Dorsolateral prefrontal cortex (tissue), 120 donors: ENCODE measurements at regions of chr1 and their contacts with region 1.

Region 1: DNA sequence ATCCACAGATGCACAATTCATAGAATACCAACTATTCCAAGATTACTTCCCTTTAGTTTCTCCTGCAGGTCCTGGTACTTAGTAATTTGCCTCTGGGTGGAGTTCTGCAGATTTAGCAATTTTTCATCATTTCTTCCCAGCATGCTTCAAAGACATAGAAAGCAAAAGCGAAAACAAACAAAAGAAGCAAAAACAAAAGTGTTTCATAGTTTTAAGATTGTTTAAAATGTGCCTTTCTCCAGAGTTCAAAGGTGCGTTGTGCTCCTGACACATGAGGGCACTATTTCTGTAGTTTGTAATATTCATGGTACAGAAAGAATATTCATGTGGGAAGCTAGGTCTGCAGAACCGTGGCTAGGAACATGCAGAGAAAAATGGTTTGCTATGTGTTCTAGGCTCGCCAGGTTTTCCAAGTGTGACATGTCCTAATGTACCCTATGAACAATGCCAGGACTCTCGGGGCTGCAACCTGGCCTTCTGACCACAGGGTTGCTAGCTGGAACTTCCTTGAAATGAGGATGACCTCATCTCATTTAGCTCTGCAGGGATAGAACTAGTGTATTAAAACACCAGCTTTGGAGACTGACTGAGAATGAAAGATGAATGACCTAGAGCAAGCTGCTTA is 30.0 kb upstream of the RCSD1 start:
- DNase-seq: peak in 1 of 10 donors; percentile 39
- H3K4me3 ChIP-seq: no peak overlapping the region
- H3K27ac ChIP-seq: peak overlapping the region in 4 of 59 donors; percentile 46 to 71 (median 62)
- H3K27me3 ChIP-seq: no peaks in the 10 kb centered on the region
- CTCF ChIP-seq: peak in 52 of 56 donors; percentile 18 to 71 (median 47)

Region 2: DNA sequence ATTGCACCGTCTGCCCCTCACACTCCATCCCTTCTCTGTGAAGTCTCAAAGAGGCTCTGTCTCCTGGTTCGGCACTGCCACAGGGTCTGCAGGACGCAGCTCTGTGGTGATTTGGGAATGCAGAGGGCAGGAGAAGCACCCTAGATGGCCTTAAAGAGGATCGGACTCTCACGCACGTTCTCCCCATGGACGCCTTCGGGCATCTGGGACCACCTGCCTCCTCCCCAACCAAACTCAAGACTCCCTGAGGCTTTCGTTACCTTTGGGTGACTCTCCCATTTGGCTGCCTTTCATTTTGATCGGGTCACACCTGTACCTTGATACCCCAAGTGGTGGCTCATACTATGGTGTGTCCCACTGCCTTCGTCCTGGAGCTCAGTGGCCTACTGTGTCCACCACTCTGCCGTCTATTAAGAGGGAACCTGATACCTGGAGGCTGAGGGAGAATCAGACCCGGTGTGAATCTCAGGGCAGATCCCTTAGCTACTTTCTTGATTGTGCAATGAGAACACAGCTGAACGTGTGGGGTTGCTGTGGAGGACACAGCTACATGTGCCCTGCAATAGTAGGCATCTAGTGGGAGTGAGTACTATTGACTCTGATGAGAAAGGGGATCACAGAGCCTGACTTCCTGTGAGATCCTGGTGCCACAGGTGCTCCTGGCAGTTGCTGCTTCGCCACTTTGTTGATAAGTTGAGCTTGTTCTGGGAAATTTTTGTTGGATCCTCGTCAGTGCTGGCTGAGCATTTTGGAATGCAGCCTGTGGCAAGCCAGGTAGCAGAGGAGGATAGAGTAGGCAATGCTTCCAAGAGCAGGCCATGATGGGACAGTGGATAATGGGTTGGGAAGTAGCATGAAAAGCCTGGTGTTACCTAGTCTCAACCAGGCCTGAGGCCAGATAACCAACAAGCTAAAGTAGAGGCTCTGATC is 93.3 kb after region 1 on chr1:
- intact Hi-C with region 1: loop called (anchors 5 kb)
- DNase-seq: no peak
- H3K4me3 ChIP-seq: no peak overlapping the region
- H3K27ac ChIP-seq: no peak overlapping the region
- H3K27me3 ChIP-seq: no peaks in the 10 kb centered on the region
- CTCF ChIP-seq: no peak

Region 3: DNA sequence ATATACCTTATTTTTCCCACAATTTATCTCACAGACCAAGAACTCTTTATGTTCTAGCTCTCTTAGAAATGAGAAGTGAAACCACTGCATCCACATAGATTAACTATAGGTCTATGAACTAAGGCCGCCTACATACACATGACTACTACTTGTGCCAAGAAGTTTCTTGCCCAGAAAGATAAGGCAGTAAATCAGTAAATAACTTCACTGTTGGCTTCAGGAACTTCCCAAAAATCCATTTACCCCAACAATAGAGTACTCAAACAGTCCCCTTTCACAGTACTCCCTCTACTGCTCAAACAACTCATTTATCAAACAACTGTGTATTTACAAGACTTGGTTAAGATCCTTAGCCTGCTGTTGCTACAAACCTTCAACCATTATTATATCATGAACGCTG is 1671.0 kb after region 1 on chr1:
- intact Hi-C with region 1: no loop called
- DNase-seq: no peak
- H3K4me3 ChIP-seq: no peak overlapping the region
- H3K27ac ChIP-seq: peak overlapping the region in 1 of 59 donors; percentile 40
- H3K27me3 ChIP-seq: no peaks in the 10 kb centered on the region
- CTCF ChIP-seq: peak in 15 of 56 donors; percentile 8 to 44 (median 15)